GM13977 (cell line): ENCODE measurements at regions of chr2 and their contacts with region 1.

Region 1: DNA sequence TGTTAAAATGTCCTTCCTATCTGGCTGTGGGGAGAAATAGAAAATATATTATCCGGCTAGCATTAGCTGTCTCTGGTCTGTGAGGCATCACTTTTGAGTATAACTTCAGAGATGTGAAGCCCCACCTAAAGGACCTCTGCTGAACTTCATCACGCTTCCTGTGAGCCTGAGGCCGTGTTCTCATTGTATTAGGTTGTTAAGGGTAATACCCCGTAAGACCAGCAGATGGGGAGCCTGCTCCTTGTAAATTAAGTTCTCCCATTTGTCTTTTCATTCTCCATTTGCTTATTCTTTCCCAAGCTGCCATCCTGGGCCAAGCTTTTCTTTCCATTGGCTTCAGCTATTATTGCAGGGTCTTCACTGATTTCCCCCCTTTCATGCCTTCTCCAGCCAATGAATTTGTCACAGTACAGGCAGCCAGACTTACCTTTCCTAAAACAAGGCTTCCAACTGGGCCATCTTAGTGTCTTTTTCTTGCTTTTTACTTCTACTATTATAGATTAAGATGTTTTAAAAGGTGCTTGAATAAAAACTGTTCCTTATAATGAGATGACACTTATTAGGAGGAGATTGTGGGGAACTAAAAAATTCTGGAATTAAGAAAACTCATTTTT is 12.4 kb downstream of the NIF3L1 start:
- DNase-seq: peak; percentile 82
- CTCF ChIP-seq: peak; percentile 75

Region 2: DNA sequence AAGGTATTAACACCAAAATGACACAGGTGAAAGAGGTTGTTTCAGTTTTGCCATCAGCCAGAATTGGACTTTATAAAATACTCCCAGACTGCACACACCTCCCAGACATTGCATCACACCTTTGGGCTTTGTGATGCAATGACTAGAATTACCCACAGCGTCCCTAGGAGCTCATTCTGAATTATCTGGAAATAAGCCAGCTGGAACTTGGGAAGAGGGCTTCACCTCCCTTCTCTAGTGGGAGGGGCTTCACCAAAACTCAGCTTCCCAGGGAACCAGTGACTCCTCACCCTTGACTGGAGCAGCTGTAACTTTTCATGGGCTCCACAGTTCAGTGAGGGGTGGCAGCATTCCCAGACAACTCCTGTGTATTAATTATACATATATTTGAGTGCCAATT is 172.9 kb before region 1 on chr2:
- in situ Hi-C with region 1: no loop called
- DNase-seq: no peak
- CTCF ChIP-seq: no peak

Region 3: DNA sequence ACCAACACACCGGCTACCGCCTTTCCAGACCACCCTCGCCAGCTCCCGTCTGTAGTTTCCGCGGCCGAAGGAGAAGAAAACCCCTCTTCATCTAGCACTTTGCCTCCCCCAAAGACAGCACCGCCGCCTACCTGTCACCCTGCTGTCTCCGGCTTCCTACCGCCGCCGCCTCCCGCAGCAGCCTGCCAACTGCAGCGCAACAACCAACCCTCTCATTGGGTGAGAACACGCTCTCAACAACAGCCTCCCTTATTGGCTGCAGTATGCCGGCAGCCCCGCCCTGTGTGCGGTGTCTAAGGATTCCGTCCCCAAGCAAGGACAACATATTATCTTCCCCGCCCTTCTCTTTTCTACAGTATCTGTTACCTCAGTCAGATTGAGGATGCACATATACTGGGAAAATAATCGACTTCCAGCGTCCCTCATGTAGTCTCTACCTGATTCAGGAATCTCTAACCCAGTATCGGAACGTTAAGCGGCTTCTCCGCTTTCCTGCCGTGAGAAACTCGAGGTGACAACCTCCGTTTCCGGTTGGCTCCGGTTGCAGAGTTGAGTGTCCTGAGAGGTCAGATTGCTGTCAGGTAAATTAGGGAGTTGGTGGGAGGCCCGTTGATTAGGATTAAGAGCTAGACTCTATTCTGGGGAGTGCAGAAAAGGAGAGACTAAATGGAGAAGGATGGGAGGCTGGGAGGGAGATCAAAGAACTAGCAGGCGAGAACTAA is 170.1 kb after region 1 on chr2 and contains the starts of genes HYCC2 and NDUFB3:
- in situ Hi-C with region 1: loop called (anchors 10 kb)
- DNase-seq: peak; percentile 94
- CTCF ChIP-seq: peak; percentile 40

Region 4: DNA sequence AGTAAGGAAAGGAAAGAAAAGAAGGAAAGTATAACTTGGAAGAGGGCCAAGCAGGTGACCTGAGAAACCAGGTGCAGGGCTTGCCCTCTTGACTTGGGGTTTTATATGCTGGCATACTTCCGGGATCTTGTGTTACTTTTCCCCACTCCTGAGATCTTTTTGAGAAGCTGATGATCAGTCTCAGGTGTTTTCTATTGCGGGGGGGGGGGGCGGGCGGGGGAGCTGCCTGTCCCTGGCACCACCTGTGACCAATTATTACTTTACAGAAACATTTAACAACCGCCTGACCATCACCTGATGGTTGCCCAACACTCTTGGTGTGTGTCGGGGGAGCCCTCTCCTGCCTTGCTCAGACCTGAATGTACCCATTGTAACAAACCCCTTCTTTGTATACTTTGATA is 274.5 kb after region 1 on chr2:
- in situ Hi-C with region 1: loop called (anchors 5 kb)
- DNase-seq: no peak
- CTCF ChIP-seq: no peak

Region 5: GRCh38 chr2:201231781-201232466 is 330.4 kb after region 1 on chr2:
- in situ Hi-C with region 1: loop called (anchors 10 kb)
- DNase-seq: peak; percentile 83
- CTCF ChIP-seq: peak; percentile 91